Naive thymus-derived CD8-positive, alpha-beta T cell (primary cell): ENCODE measurements at regions of chr2 and their contacts with region 1.

Region 1: GRCh38 chr2:3651691-3652648 is 6.0 kb upstream of the ALLC start:
- DNase-seq: peak; percentile 46 to 94 (median 76)
- ATAC-seq: peak; percentile 80 to 82
- H3K4me3 Mint-ChIP-seq: peak overlapping the region; percentile 74 to 97 (median 90)
- H3K27ac Mint-ChIP-seq: peak overlapping the region; percentile 68 to 99 (median 98)
- H3K4me1 Mint-ChIP-seq: peaks cover 6 to 18% (median 17%) of the 10 kb centered on the region in 4 donors
- H3K27me3 Mint-ChIP-seq: peaks cover 0 to 3% (median 0%) of the 10 kb centered on the region in 5 donors

Region 2: GRCh38 chr2:3379647-3380534 is 272.1 kb before region 1 on chr2 and contains the start of gene TRAPPC12:
- POLR2A ChIA-PET with region 1: interaction called, 17 read pairs
- DNase-seq: peak; percentile 87 to 95 (median 92)
- ATAC-seq: peak; percentile 74 to 81
- H3K4me3 Mint-ChIP-seq: peak within 1 kb of the TSS; percentile 92 to 99 (median 97)
- H3K27ac Mint-ChIP-seq: peak within 1 kb of the TSS; percentile 95 to 99 (median 98)
- H3K4me1 Mint-ChIP-seq: peaks cover 18 to 71% (median 57%) of the 10 kb centered on the region in 4 donors
- H3K27me3 Mint-ChIP-seq: no peaks in the 10 kb centered on the region
- polyA plus RNA-seq, gene TRAPPC12: 23.8 to 44.0 (median 34.0) TPM

Region 3: GRCh38 chr2:3518496-3519254 is 133.3 kb before region 1 on chr2:
- POLR2A ChIA-PET with region 1: interaction called, 15 read pairs
- DNase-seq: peak; percentile 94 to 100 (median 99)
- ATAC-seq: peak; percentile 74 to 77
- H3K4me3 Mint-ChIP-seq: peak overlapping the region; percentile 90 to 98 (median 94)
- H3K27ac Mint-ChIP-seq: peak overlapping the region; percentile 65 to 98 (median 93)
- H3K4me1 Mint-ChIP-seq: peaks cover 27 to 47% (median 41%) of the 10 kb centered on the region in 4 donors
- H3K27me3 Mint-ChIP-seq: peaks cover 0 to 4% (median 0%) of the 10 kb centered on the region in 5 donors

Region 4: DNA sequence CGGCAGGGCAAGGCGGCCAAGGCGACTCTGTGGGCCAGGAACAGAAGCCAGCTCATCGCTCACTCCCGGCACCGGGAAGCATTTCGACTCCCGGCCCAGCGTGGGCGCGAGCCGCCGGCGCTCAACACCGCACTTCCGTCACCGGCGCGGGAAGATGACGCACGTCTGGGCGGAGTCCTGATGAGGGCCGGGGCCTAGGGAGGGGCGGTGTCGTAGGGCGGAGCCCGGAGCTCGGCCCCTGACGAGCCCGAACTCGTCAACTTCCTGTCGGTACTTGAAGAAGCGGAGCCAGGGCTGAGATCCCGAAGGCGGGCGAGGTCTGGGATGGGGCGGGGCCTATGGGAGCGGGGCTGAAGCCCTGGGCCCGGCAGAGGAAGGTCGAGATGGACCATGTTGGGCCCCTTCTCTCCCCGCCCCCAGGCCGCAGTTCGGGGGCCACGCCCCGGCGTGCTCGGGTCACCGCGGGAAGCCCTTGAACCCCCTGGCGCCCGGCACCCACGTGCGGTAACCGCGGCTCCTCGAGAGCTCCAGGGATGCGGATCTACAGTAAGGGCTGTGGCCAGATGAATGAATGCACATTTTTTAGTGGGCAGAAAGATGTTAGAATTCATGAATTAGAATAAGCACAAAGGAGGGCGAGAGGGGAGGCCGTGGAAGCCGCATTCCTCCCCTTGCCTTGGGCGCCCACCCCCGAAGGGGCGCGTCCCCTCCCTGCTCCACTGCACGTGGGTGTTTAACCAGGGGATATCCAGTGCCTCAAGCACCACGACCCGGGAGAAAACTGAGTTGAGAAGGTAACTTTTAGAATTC is 93.6 kb before region 1 on chr2 and contains the start of gene RNASEH1:
- POLR2A ChIA-PET with region 1: interaction called, 23 read pairs
- DNase-seq: peak; percentile 95 to 99 (median 98)
- ATAC-seq: peak; percentile 93 to 95
- H3K4me3 Mint-ChIP-seq: peak within 1 kb of the TSS; percentile 86 to 95 (median 92)
- H3K27ac Mint-ChIP-seq: peak within 1 kb of the TSS; percentile 87 to 98 (median 97)
- H3K4me1 Mint-ChIP-seq: peaks cover 8 to 42% (median 34%) of the 10 kb centered on the region in 4 donors
- H3K27me3 Mint-ChIP-seq: no peaks in the 10 kb centered on the region
- polyA plus RNA-seq, gene RNASEH1: 35.4 to 47.0 (median 35.5) TPM

Region 5: GRCh38 chr2:3575534-3576262 is 76.3 kb before region 1 on chr2:
- POLR2A ChIA-PET with region 1: interaction called, 10 read pairs
- DNase-seq: peak in 8 of 10 donors; percentile 5 to 50 (median 32)
- ATAC-seq: peak; percentile 39 to 50
- H3K4me3 Mint-ChIP-seq: peak overlapping the region; percentile 86 to 94 (median 90)
- H3K27ac Mint-ChIP-seq: peak overlapping the region; percentile 95 to 98 (median 97)
- H3K4me1 Mint-ChIP-seq: peaks cover 28 to 49% (median 43%) of the 10 kb centered on the region in 4 donors
- H3K27me3 Mint-ChIP-seq: no peaks in the 10 kb centered on the region

Region 6: DNA sequence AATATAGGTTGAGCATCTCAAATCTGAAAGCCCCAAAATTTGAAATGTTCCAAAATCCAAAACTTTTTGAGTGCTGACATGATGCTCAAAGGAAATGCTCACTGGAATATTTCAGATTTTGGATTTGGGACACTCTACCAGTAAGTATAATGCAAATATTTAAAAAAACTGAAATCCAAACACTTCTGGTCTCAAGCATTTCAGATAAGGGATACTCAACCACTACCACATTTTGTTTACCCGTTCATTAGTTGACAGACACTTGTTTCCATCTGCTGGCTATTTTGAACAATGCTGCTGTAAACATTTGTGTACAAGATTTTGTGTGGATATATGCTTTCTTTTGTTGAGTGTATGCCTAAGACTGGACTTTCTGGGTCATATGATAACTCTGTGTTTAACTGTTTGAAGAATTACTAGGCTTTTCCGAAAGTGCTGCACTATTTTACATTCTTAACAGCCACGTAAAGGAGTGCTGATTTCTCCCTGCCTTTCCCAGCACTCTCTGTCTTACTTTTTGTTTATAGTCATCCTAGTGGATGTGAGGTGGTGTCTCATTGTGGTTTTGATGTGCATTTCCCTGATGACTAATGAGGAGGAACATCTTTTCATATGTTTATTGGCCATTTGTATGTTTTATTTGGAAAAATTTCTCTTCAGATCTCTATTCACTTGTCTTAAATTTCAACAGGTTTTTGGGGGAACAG is 31.9 kb after region 1 on chr2:
- POLR2A ChIA-PET with region 1: no interaction called
- DNase-seq: no peak
- ATAC-seq: no peak
- H3K4me3 Mint-ChIP-seq: no peak overlapping the region
- H3K27ac Mint-ChIP-seq: no peak overlapping the region
- H3K4me1 Mint-ChIP-seq: no peaks in the 10 kb centered on the region
- H3K27me3 Mint-ChIP-seq: peaks cover 1 to 34% (median 12%) of the 10 kb centered on the region in 5 donors

Region 7: GRCh38 chr2:3727397-3728045 is 75.6 kb after region 1 on chr2:
- POLR2A ChIA-PET with region 1: no interaction called
- DNase-seq: no peak
- ATAC-seq: no peak
- H3K4me3 Mint-ChIP-seq: no peak overlapping the region
- H3K27ac Mint-ChIP-seq: no peak overlapping the region
- H3K4me1 Mint-ChIP-seq: peaks cover 0 to 2% (median under 1%) of the 10 kb centered on the region in 4 donors
- H3K27me3 Mint-ChIP-seq: peaks cover 4 to 62% (median 24%) of the 10 kb centered on the region in 5 donors